ENCODE measurements at regions of chr3 and their contacts with region 1.

Region 1: DNA sequence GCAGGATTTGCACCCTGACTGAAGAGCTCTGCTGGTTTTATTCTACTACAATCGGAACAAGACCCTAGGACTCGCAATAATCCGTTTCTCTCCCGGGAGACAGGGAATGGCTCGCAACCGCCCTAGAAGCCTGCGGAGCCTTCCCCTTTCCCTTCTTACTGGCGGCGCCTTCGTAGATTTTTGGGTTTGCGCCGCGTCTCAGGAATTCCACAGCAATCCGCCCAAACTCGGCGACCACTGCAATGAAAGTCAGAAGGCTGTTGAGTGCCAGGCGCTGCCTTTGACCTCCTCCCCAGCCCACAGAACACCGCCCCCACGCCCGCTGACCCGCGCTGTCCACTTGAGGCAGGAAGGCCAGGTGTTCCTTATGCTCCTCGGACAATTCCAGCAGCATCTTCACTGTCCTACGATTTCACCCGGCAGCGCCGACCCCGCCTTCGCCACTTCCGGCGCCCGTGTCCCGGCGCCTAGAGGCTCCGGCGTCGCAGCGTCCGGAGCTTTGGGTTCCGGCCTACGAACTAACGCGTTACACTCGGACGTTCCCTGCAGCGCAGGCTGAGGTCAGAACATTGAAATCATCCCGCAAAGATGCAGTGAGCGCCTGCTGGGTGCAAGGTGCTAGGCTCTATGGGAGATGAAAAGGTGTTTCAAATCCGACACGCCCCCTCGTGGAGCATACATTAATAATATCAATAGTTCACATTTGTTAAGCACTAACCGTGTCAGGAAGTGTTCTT is at the start of gene COMMD2:
- DNase-seq: peak; percentile 83
- H3K4me3 ChIP-seq: peak within 1 kb of the TSS; percentile 74 to 94 (median 91)
- H3K27ac ChIP-seq: peak within 1 kb of the TSS; percentile 33
- H3K4me1 ChIP-seq: peaks cover 15% of the 10 kb centered on the region
- H3K27me3 ChIP-seq: no peaks in the 10 kb centered on the region
- CTCF ChIP-seq: peak in 1 of 2 donors; percentile 17
- POLR2A ChIP-seq: peak; percentile 86
- total RNA-seq, gene COMMD2: 42.9 and 51.0 TPM in 2 replicates

Region 2: DNA sequence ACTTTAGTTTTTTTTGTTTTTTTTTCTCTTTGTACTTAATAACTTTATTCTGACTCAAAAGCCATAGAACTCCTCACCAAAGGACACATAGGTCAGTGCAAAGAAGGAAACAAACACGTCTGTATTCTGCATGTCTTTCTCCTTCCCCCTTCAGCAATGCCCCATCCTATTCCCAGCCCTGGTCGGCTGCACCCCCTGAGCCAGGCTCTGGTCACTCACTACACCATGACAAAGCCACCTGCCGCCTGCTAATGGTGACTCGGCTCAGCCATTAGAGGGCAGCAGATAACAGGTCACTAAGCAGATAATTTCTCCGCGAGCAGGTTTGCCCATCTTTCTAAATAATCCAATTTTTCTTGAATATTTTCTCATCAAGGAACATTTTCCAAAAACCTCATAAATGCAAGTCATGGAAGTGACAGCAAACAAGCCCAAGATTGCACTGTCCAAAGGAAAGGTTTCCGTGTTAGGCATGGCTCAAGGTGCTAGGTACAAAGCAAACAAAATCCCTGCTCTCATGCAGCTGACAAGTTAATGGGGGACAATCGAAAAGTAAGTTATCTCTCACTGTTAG is 239.9 kb before region 1 on chr3:
- CTCF ChIA-PET with region 1: interaction called, 3 read pairs
- POLR2A ChIA-PET with region 1: no interaction called
- dilution Hi-C with region 1: loop called (anchors 25 kb)
- intact Hi-C with region 1: loop called (anchors 1 kb)
- DNase-seq: peak; percentile 77
- H3K4me3 ChIP-seq: no peak overlapping the region
- H3K27ac ChIP-seq: no peak overlapping the region
- H3K4me1 ChIP-seq: peaks cover 18% of the 10 kb centered on the region
- H3K27me3 ChIP-seq: no peaks in the 10 kb centered on the region
- CTCF ChIP-seq: peak; percentile 66 to 71
- POLR2A ChIP-seq: no peak

Region 3: GRCh38 chr3:149527531-149528339 is 224.5 kb before region 1 on chr3:
- CTCF ChIA-PET with region 1: interaction called, 6 read pairs
- POLR2A ChIA-PET with region 1: no interaction called
- dilution Hi-C with region 1: loop called (anchors 25 kb)
- intact Hi-C with region 1: loop called (anchors 1 kb)
- DNase-seq: peak; percentile 85
- H3K4me3 ChIP-seq: no peak overlapping the region
- H3K27ac ChIP-seq: peak overlapping the region; percentile 62
- H3K4me1 ChIP-seq: peaks cover 43% of the 10 kb centered on the region
- H3K27me3 ChIP-seq: no peaks in the 10 kb centered on the region
- CTCF ChIP-seq: peak in 1 of 2 donors; percentile 50
- POLR2A ChIP-seq: no peak

Region 4: DNA sequence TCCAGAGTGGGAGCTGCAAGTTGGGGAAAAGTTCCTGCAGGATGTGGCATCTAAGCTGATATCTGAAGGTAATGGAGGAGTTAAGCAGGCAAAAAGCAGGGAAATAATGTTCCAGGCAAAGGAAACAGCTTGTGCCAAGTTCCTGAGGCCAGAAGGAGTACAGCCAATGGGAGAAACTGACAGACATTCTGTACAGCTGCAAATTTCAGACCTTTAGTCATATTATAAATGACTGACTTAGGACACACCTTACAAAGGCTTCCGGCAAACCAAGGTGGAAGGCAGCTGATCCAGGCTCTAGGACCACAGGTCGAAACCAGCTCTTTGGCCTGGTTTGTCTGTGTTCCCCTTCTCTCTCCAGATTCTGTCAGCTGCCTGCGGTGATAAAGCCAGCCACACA is 103.7 kb before region 1 on chr3:
- CTCF ChIA-PET with region 1: no interaction called
- POLR2A ChIA-PET with region 1: no interaction called
- dilution Hi-C with region 1: no loop called
- intact Hi-C with region 1: loop called (anchors 2 kb)
- DNase-seq: peak; percentile 80
- H3K4me3 ChIP-seq: peak overlapping the region in 1 of 3 experiments; percentile 13
- H3K27ac ChIP-seq: peak overlapping the region; percentile 37
- H3K4me1 ChIP-seq: peaks cover 88% of the 10 kb centered on the region
- H3K27me3 ChIP-seq: no peaks in the 10 kb centered on the region
- CTCF ChIP-seq: no peak
- POLR2A ChIP-seq: peak; percentile 68

Region 5: GRCh38 chr3:149765762-149766334 is 13.6 kb after region 1 on chr3:
- CTCF ChIA-PET with region 1: interaction called, 28 read pairs
- POLR2A ChIA-PET with region 1: no interaction called
- dilution Hi-C with region 1: no loop called
- intact Hi-C with region 1: no loop called
- DNase-seq: peak; percentile 59
- H3K4me3 ChIP-seq: no peak overlapping the region
- H3K27ac ChIP-seq: no peak overlapping the region
- H3K4me1 ChIP-seq: no peaks in the 10 kb centered on the region
- H3K27me3 ChIP-seq: peaks cover 33 to 42% of the 10 kb centered on the region in 2 experiments
- CTCF ChIP-seq: peak; percentile 20 to 39
- POLR2A ChIP-seq: no peak

Region 6: GRCh38 chr3:150049317-150049716 is 297.1 kb after region 1 on chr3:
- CTCF ChIA-PET with region 1: no interaction called
- POLR2A ChIA-PET with region 1: no interaction called
- dilution Hi-C with region 1: no loop called
- intact Hi-C with region 1: no loop called
- DNase-seq: no peak
- H3K4me3 ChIP-seq: no peak overlapping the region
- H3K27ac ChIP-seq: no peak overlapping the region
- H3K4me1 ChIP-seq: no peaks in the 10 kb centered on the region
- H3K27me3 ChIP-seq: peaks cover 16% of the 10 kb centered on the region in 2 experiments
- CTCF ChIP-seq: no peak
- POLR2A ChIP-seq: no peak

Region 7: DNA sequence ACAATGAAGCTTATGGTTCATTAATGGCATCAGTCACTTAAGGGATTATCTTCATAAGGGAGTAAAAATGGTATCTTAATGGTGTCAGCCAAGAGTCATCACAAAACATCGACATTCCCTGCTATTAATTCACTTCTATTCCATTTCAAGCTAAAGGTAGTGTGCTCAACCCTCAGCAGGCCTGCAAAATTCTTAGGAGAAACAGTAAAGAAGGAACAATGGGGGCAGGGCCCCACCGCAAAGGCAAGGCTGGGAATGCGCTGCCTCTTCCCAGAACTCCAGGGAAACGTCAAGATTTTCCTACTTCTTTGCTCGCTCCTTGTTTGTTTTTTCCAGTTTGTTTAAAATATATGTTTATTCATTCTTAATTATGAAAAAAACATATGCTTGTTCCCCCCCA is 468.6 kb after region 1 on chr3:
- CTCF ChIA-PET with region 1: no interaction called
- POLR2A ChIA-PET with region 1: no interaction called
- dilution Hi-C with region 1: no loop called
- intact Hi-C with region 1: no loop called
- DNase-seq: no peak
- H3K4me3 ChIP-seq: no peak overlapping the region
- H3K27ac ChIP-seq: no peak overlapping the region
- H3K4me1 ChIP-seq: peaks cover 4% of the 10 kb centered on the region
- H3K27me3 ChIP-seq: peaks cover 56 to 57% of the 10 kb centered on the region in 2 experiments
- CTCF ChIP-seq: no peak
- POLR2A ChIP-seq: no peak

Measured in endothelial cell of umbilical vein (primary cell).